ENCODE measurements at regions of chr3 and their contacts with region 1.

Region 1: DNA sequence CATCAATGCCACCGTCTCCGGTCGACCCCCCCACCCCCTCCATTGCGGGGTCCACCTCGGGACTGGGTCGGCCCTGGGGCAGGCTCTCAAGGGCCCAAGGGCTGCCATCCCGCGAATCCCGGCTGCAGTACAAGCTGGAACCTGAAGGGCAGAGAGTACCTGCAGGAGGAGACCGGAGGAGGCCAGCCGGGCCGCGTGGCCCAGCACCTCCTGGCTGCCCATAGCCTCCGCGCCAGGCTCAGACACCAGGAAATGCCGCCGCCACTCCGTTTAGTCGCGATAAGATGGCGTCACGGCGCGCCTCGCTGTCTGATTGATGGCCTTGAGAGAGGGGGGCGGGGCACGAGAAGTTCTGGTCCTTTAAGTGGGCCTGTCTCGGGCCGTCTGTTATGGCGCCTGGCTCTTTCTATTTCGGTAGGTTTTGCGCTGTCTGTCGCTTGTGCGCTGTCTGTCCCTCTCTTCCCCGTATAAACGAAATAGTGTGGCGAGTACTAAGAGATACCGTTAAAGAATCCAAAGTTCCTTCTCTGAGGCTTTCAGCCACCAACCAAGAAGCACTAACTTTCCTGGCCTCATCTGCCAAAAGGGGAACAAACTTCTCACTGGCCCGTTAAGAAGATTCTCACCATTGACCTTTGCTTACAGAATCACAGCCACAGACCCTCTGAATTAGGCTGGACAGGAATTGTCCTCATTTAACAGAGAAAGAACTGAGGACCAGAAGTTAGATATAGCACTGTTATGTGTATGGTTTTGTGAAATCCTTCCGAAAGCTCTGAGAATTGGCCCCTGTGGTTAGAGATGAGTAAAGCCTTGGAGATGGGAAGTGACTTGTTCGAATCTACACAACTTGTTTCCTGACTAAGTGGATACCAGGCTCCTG is at the start of gene RFT1:
- DNase-seq: peak; percentile 95 to 99 (median 99)
- ATAC-seq: peak; percentile 92
- H3K4me3 ChIP-seq: peak within 1 kb of the TSS; percentile 90 to 93
- H3K4me3 Mint-ChIP-seq: peak within 1 kb of the TSS; percentile 91
- H3K27ac ChIP-seq: peak within 1 kb of the TSS; percentile 89 to 98
- H3K27ac Mint-ChIP-seq: peak within 1 kb of the TSS; percentile 99
- H3K4me1 ChIP-seq: peaks cover 21% of the 10 kb centered on the region
- H3K4me1 Mint-ChIP-seq: peaks cover 37% of the 10 kb centered on the region
- H3K27me3 ChIP-seq: no peaks in the 10 kb centered on the region
- H3K27me3 Mint-ChIP-seq: no peaks in the 10 kb centered on the region
- CTCF ChIP-seq: no peak
- total RNA-seq, gene RFT1: 6.6 to 7.0 TPM

Region 2: DNA sequence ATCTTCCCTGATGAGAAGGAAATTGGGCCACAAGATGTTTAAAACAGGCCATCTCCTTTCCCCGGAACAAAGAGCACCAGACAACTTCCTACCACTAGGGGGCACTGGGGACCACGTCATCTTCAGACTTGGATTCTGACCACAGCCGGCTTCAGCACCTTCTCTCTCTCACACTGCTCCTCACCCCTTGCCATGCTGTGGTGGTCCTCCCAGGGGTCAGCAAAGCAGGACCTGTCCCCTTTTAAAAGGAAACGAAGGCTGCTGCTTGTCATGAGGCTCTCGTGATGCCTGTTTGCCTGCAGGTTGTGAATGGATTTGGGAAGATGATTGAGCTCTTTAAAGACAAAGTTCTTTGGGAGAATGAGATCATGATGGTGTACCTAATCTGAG is 16.4 kb before region 1 on chr3:
- CTCF ChIA-PET with region 1: interaction called, 14 read pairs
- POLR2A ChIA-PET with region 1: no interaction called
- intact Hi-C with region 1: no loop called
- DNase-seq: peak; percentile 67 to 88 (median 84)
- ATAC-seq: peak; percentile 89
- H3K4me3 ChIP-seq: no peak overlapping the region
- H3K4me3 Mint-ChIP-seq: no peak overlapping the region
- H3K27ac ChIP-seq: peak overlapping the region in 1 of 2 experiments; percentile 15
- H3K27ac Mint-ChIP-seq: no peak overlapping the region
- H3K4me1 ChIP-seq: no peaks in the 10 kb centered on the region
- H3K4me1 Mint-ChIP-seq: peaks cover 8% of the 10 kb centered on the region
- H3K27me3 ChIP-seq: no peaks in the 10 kb centered on the region
- H3K27me3 Mint-ChIP-seq: no peaks in the 10 kb centered on the region
- CTCF ChIP-seq: peak; percentile 89

Region 3: GRCh38 chr3:53160660-53161449 is 30.4 kb after region 1 on chr3 and contains the start of gene PRKCD:
- CTCF ChIA-PET with region 1: interaction called, 9 read pairs
- POLR2A ChIA-PET with region 1: interaction called, 4 read pairs
- intact Hi-C with region 1: loop called (anchors 1 kb)
- DNase-seq: peak; percentile 60 to 90 (median 79)
- ATAC-seq: peak; percentile 75
- H3K4me3 ChIP-seq: peak within 1 kb of the TSS; percentile 85 to 96
- H3K4me3 Mint-ChIP-seq: peak within 1 kb of the TSS; percentile 87
- H3K27ac ChIP-seq: peak within 1 kb of the TSS; percentile 50 to 53
- H3K27ac Mint-ChIP-seq: peak within 1 kb of the TSS; percentile 85
- H3K4me1 ChIP-seq: peaks cover 29% of the 10 kb centered on the region
- H3K4me1 Mint-ChIP-seq: peaks cover 24% of the 10 kb centered on the region
- H3K27me3 ChIP-seq: peaks cover under 1 to 3% of the 10 kb centered on the region in 2 experiments
- H3K27me3 Mint-ChIP-seq: peaks cover 14% of the 10 kb centered on the region
- CTCF ChIP-seq: peak; percentile 11
- total RNA-seq, gene PRKCD: 19.6 to 20.7 TPM

Region 4: DNA sequence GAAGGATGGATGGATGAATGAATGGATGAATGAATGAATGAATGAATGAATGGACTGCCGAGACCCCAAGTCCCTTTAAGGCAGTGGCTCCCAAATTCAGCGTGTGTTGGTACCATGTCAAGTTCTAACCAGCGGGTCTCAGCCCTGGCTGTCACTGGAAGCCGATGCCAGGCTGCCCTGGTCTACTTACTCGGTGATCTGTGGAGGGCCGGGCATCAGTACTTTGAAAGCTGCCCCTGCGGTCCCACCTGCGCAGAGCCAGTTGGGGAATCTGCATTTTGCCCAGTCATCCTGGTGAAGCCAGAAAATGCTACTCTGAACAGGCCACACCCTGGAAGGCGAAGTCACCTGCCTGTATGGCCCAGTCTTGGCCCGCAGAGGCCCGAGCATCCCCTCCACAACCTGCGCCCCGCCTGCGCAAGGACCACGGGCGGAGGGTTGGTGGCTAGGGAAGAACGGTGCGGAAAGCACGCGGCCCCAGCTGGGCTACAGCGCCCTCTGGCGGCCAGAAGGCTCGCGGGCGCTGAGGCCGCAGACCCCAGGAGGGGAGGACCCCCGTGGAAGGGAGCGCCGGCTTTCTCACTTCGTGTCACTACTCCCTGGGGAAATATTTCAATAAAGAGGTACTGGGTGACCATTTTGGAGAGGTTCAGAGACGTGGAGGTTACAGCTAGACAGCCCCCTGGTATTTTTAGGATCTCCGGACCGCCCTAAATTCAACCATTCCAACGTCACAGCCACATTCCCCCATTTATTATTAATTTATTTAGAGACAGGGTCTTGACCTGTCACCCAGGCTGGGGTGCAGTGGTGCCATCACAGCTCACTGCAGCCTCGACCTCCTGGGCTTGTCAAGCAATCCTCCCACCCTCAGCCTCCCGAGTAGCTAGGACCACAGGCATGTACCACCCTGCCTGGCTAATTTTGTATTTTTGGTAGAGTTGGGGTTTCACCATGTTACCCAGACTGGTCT is 65.5 kb after region 1 on chr3:
- CTCF ChIA-PET with region 1: interaction called, 78 read pairs
- POLR2A ChIA-PET with region 1: interaction called, 3 read pairs
- intact Hi-C with region 1: loop called (anchors 1 kb)
- DNase-seq: peak; percentile 20 to 78 (median 47)
- ATAC-seq: peak; percentile 77
- H3K4me3 ChIP-seq: no peak overlapping the region
- H3K4me3 Mint-ChIP-seq: no peak overlapping the region
- H3K27ac ChIP-seq: no peak overlapping the region
- H3K27ac Mint-ChIP-seq: no peak overlapping the region
- H3K4me1 ChIP-seq: peaks cover 4% of the 10 kb centered on the region
- H3K4me1 Mint-ChIP-seq: peaks cover 2% of the 10 kb centered on the region
- H3K27me3 ChIP-seq: no peaks in the 10 kb centered on the region
- H3K27me3 Mint-ChIP-seq: peaks cover 4% of the 10 kb centered on the region
- CTCF ChIP-seq: peak; percentile 94

Region 5: GRCh38 chr3:53255775-53256703 is 125.6 kb after region 1 on chr3 and contains the start of gene TKT:
- CTCF ChIA-PET with region 1: no interaction called
- POLR2A ChIA-PET with region 1: no interaction called
- intact Hi-C with region 1: loop called in 1 of 2 experiments (anchors 1 kb)
- DNase-seq: peak; percentile 50 to 90 (median 77)
- ATAC-seq: peak; percentile 85
- H3K4me3 ChIP-seq: peak within 1 kb of the TSS; percentile 71 to 96
- H3K4me3 Mint-ChIP-seq: peak within 1 kb of the TSS; percentile 91
- H3K27ac ChIP-seq: peak within 1 kb of the TSS; percentile 58 to 60
- H3K27ac Mint-ChIP-seq: peak within 1 kb of the TSS; percentile 82
- H3K4me1 ChIP-seq: peaks cover 27% of the 10 kb centered on the region
- H3K4me1 Mint-ChIP-seq: peaks cover 34% of the 10 kb centered on the region
- H3K27me3 ChIP-seq: no peaks in the 10 kb centered on the region
- H3K27me3 Mint-ChIP-seq: no peaks in the 10 kb centered on the region
- CTCF ChIP-seq: no peak
- total RNA-seq, gene TKT: 94.5 to 99.9 TPM

Region 6: GRCh38 chr3:53303957-53304356 is 173.5 kb after region 1 on chr3:
- CTCF ChIA-PET with region 1: no interaction called
- POLR2A ChIA-PET with region 1: no interaction called
- intact Hi-C with region 1: no loop called
- DNase-seq: no peak
- ATAC-seq: no peak
- H3K4me3 ChIP-seq: no peak overlapping the region
- H3K4me3 Mint-ChIP-seq: no peak overlapping the region
- H3K27ac ChIP-seq: no peak overlapping the region
- H3K27ac Mint-ChIP-seq: no peak overlapping the region
- H3K4me1 ChIP-seq: no peaks in the 10 kb centered on the region
- H3K4me1 Mint-ChIP-seq: no peaks in the 10 kb centered on the region
- H3K27me3 ChIP-seq: no peaks in the 10 kb centered on the region
- H3K27me3 Mint-ChIP-seq: no peaks in the 10 kb centered on the region
- CTCF ChIP-seq: no peak

Region 7: DNA sequence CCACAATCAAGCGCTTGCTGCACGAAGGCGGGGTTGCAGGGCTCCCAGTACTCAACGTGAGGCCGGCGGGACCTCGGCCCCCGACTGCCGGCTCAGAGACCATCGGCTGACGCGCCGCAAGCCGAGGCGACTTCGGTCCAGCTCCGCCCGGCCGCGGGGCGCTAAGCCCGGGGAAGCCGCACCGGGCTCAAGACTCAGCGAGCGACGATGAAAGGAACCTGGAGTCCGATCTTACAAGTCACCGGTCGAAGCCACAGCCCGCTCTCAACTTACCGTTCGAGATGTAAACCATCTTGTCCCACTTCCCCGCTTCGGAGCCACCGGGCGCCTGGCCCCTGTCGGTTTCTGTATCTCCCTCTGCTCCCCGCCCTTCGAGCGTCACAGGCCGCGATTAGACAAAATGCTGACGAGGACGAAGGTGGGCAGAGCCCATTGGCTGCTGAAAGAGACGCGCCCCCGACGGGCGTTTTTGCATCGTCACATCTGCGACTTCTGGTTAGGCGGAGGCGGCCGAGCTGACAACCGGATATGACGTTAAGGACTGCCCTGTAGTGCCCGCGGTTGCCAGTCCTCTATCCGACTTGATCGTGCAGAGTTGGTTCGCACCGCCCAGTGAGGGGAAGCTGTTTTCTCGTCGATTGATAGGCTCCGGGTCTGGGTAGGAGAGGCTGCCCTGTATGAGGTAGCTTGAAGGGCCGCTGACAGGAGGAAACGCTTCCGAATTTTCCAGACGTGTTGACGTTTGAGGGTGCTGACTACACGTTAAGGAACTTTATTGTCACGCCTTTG is 761.3 kb after region 1 on chr3 and contains the start of gene SELENOK:
- CTCF ChIA-PET with region 1: no interaction called
- POLR2A ChIA-PET with region 1: no interaction called
- intact Hi-C with region 1: loop called in 1 of 2 experiments (anchors 2 kb)
- DNase-seq: peak; percentile 92 to 99 (median 96)
- ATAC-seq: peak; percentile 90
- H3K4me3 ChIP-seq: peak within 1 kb of the TSS; percentile 89 to 91
- H3K4me3 Mint-ChIP-seq: peak within 1 kb of the TSS; percentile 93
- H3K27ac ChIP-seq: peak within 1 kb of the TSS; percentile 98 to 99
- H3K27ac Mint-ChIP-seq: peak within 1 kb of the TSS; percentile 99
- H3K4me1 ChIP-seq: peaks cover 37% of the 10 kb centered on the region
- H3K4me1 Mint-ChIP-seq: peaks cover 49% of the 10 kb centered on the region
- H3K27me3 ChIP-seq: no peaks in the 10 kb centered on the region
- H3K27me3 Mint-ChIP-seq: no peaks in the 10 kb centered on the region
- CTCF ChIP-seq: no peak
- total RNA-seq, gene SELENOK: 185 to 187 TPM

Measured in CD8-positive, alpha-beta T cell (primary cell).